CD14-positive monocyte (primary cell): ENCODE measurements at regions of chr15 and their contacts with region 1.

Region 1: GRCh38 chr15:39426552-39427532 is 154.0 kb upstream of the THBS1 start:
- DNase-seq: peak; percentile 98 to 100 (median 99)
- H3K4me3 ChIP-seq: peak overlapping the region; percentile 18 to 58 (median 37)
- H3K4me3 Mint-ChIP-seq: peak overlapping the region; percentile 73 to 93
- H3K27ac ChIP-seq: peak overlapping the region; percentile 81 to 100
- H3K27ac Mint-ChIP-seq: peak overlapping the region; percentile 97 to 99 (median 98)
- H3K4me1 ChIP-seq: peaks cover 49 to 53% of the 10 kb centered on the region in 2 donors
- H3K4me1 Mint-ChIP-seq: peaks cover 48% of the 10 kb centered on the region
- H3K27me3 ChIP-seq: no peaks in the 10 kb centered on the region
- H3K27me3 Mint-ChIP-seq: peaks cover 0 to 4% (median 0%) of the 10 kb centered on the region in 3 donors
- CTCF ChIP-seq: no peak

Region 2: DNA sequence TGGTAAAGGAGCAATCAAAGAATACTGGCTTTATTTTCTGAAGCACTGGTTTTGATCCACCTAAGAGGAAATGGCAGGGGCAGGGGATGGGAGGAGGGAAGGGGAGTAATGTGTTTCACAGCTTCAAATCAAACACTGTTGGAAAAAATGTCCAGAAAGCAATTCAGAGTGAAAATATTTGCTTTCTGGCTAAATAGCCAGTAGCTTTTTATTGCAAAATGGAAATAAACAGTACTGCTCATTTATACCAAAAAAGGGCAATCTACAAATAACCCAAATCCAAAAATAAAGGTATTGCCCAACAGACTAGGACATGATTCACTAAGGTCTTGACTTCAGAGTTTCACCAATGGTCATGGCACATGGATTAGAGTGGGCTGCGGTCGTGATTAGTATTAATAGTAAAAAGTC is 125.2 kb before region 1 on chr15:
- intact Hi-C with region 1: no loop called
- DNase-seq: peak in 1 of 3 donors; percentile 31
- H3K4me3 ChIP-seq: no peak overlapping the region
- H3K4me3 Mint-ChIP-seq: no peak overlapping the region
- H3K27ac ChIP-seq: no peak overlapping the region
- H3K27ac Mint-ChIP-seq: peak overlapping the region in 1 of 7 donors; percentile 10
- H3K4me1 ChIP-seq: peaks cover 0 to 10% of the 10 kb centered on the region in 2 donors
- H3K4me1 Mint-ChIP-seq: peaks cover 16% of the 10 kb centered on the region
- H3K27me3 ChIP-seq: peaks cover 14 to 16% of the 10 kb centered on the region in 2 donors
- H3K27me3 Mint-ChIP-seq: peaks cover 17 to 25% (median 23%) of the 10 kb centered on the region in 3 donors
- CTCF ChIP-seq: no peak

Region 3: DNA sequence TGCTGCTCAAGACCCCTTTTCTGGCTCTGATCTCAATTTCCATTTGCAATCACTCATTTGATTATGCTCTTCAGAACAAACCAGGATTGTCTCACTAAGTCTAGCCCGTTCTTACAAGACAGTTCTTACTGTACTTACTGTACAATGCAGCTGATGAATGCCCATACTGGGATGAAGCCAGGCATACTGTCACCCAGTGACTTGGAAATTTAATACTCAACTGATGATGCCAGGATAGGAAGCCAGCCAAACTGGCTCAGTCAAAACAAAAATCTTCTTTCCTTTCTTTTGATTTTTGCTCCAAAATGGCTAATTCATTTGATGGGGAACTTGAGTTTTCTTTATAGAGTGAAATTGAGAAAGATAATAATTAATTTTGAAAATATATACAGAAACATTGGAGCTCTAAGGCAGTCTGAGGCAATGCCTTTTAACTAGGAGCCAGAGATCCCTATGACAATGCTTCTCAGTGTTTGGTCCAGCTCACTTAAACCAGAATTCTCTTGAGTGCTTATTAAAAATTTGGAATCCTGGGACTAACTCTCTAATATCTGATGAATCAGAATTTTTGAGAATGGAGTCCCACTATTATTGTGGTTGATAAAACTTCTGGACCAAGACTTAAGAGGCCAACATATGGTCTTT is 111.5 kb before region 1 on chr15:
- intact Hi-C with region 1: no loop called
- DNase-seq: no peak
- H3K4me3 ChIP-seq: no peak overlapping the region
- H3K4me3 Mint-ChIP-seq: peak overlapping the region in 1 of 2 donors; percentile 53
- H3K27ac ChIP-seq: no peak overlapping the region
- H3K27ac Mint-ChIP-seq: peak overlapping the region in 1 of 7 donors; percentile 43
- H3K4me1 ChIP-seq: peaks cover 6 to 20% of the 10 kb centered on the region in 2 donors
- H3K4me1 Mint-ChIP-seq: peaks cover 26% of the 10 kb centered on the region
- H3K27me3 ChIP-seq: no peaks in the 10 kb centered on the region
- H3K27me3 Mint-ChIP-seq: peaks cover 0 to 4% (median 2%) of the 10 kb centered on the region in 3 donors
- CTCF ChIP-seq: no peak

Region 4: DNA sequence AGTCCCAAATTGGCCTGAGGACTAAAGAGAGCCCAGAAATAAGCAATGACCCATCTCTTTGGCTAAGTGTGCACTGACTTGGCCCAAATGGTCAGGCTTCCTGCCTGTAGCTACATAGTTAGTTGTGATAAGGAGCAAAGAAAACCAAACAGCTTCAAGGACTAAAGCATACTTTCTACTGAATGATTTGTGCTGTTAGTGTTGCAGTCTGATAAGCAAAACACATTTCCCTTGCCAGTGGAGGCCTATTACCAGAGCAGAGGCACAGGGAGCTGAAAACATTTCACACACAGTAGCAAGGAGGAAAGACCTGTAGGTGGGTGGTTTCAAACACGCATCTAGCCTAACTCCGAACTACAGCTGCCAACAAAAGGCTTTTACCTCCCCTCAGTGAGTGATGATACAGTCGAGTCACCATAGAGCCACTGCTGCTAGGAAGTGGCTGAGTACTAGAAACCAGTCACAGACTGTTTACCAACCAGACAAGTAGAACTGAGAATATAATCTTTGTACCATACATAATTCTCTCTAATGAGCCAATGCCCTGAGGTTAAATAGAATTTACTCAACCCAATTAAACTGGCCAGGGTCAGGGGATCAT is 68.3 kb before region 1 on chr15:
- intact Hi-C with region 1: no loop called
- DNase-seq: no peak
- H3K4me3 ChIP-seq: no peak overlapping the region
- H3K4me3 Mint-ChIP-seq: no peak overlapping the region
- H3K27ac ChIP-seq: no peak overlapping the region
- H3K27ac Mint-ChIP-seq: no peak overlapping the region
- H3K4me1 ChIP-seq: peaks cover 9 to 20% of the 10 kb centered on the region in 2 donors
- H3K4me1 Mint-ChIP-seq: peaks cover 19% of the 10 kb centered on the region
- H3K27me3 ChIP-seq: no peaks in the 10 kb centered on the region
- H3K27me3 Mint-ChIP-seq: peaks cover 0 to 4% (median 4%) of the 10 kb centered on the region in 3 donors
- CTCF ChIP-seq: no peak

Region 5: GRCh38 chr15:39376371-39376909 is 50.4 kb before region 1 on chr15:
- intact Hi-C with region 1: loop called in 1 of 2 experiments (anchors 5 kb)
- DNase-seq: peak; percentile 80 to 95 (median 82)
- H3K4me3 ChIP-seq: no peak overlapping the region
- H3K4me3 Mint-ChIP-seq: peak overlapping the region in 1 of 2 donors; percentile 13
- H3K27ac ChIP-seq: peak overlapping the region; percentile 87 to 88
- H3K27ac Mint-ChIP-seq: peak overlapping the region; percentile 89 to 97 (median 93)
- H3K4me1 ChIP-seq: peaks cover 34 to 71% of the 10 kb centered on the region in 2 donors
- H3K4me1 Mint-ChIP-seq: peaks cover 60% of the 10 kb centered on the region
- H3K27me3 ChIP-seq: no peaks in the 10 kb centered on the region
- H3K27me3 Mint-ChIP-seq: peaks cover 0 to 5% (median 2%) of the 10 kb centered on the region in 3 donors
- CTCF ChIP-seq: no peak

Region 6: GRCh38 chr15:39465843-39466749 is 39.3 kb after region 1 on chr15:
- intact Hi-C with region 1: loop called in 1 of 2 experiments (anchors 5 kb)
- DNase-seq: no peak
- H3K4me3 ChIP-seq: no peak overlapping the region
- H3K4me3 Mint-ChIP-seq: no peak overlapping the region
- H3K27ac ChIP-seq: no peak overlapping the region
- H3K27ac Mint-ChIP-seq: no peak overlapping the region
- H3K4me1 ChIP-seq: peaks cover 30 to 42% of the 10 kb centered on the region in 2 donors
- H3K4me1 Mint-ChIP-seq: peaks cover 33% of the 10 kb centered on the region
- H3K27me3 ChIP-seq: no peaks in the 10 kb centered on the region
- H3K27me3 Mint-ChIP-seq: no peaks in the 10 kb centered on the region
- CTCF ChIP-seq: no peak

Region 7: GRCh38 chr15:39782441-39783138 is 355.7 kb after region 1 on chr15 and contains the start of gene FSIP1:
- intact Hi-C with region 1: no loop called
- DNase-seq: peak; percentile 94 to 95 (median 95)
- H3K4me3 ChIP-seq: peak within 1 kb of the TSS; percentile 81 to 91 (median 89)
- H3K4me3 Mint-ChIP-seq: peak within 1 kb of the TSS; percentile 94
- H3K27ac ChIP-seq: peak within 1 kb of the TSS; percentile 45 to 83
- H3K27ac Mint-ChIP-seq: peak within 1 kb of the TSS; percentile 87 to 96 (median 92)
- H3K4me1 ChIP-seq: peaks cover 17 to 20% of the 10 kb centered on the region in 2 donors
- H3K4me1 Mint-ChIP-seq: peaks cover 27% of the 10 kb centered on the region
- H3K27me3 ChIP-seq: no peaks in the 10 kb centered on the region
- H3K27me3 Mint-ChIP-seq: no peaks in the 10 kb centered on the region
- CTCF ChIP-seq: no peak
- polyA plus RNA-seq, gene FSIP1: 0.10 to 0.48 (median 0.21) TPM